HEK293T (cell line): ENCODE measurements at regions of chr17 and their contacts with region 1.

Region 1: DNA sequence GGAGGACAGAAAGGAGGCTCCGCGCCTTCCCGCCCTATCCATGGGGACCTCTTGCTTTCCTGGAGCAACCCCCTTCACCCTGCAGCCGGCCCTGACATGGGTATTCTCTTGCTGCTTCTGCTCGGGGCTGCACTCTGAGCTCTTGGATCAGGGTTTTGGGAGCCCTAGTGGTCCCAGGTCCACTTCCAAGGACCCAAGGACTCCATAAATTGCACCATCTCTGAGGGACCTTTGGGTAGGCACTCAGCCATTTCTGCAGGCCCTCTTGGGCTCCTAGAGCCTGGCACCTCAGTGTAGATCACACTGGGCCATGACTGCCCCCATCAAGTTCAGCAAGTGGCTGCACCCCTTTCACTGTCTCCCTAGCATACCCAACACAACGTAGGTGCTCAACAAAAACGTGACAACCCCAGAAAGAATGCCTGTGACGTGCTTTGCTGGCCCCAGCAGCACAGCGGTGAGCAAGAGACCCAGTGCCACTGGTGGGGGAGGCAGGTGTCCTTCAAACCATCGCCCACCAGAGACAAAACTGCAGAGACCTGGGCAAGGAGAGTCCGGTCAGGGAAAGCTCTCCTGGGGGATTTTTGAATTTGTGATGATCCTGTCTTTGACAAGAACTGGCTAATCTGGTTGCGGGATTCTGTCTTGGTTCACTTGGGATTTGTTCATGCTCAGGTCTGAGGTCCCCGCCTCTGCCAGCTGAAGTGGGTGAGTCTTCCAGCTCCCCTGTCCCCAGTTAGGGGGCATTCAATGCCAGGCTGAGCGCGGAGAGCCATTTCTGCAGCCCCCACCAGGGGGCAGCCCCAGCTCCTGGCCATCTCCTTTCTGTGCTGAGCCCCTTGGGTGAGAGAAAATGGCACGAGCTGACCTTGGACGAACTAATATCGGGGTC is 2.5 kb upstream of the RAB11FIP4 start:
- DNase-seq: peak; percentile 44

Region 2: DNA sequence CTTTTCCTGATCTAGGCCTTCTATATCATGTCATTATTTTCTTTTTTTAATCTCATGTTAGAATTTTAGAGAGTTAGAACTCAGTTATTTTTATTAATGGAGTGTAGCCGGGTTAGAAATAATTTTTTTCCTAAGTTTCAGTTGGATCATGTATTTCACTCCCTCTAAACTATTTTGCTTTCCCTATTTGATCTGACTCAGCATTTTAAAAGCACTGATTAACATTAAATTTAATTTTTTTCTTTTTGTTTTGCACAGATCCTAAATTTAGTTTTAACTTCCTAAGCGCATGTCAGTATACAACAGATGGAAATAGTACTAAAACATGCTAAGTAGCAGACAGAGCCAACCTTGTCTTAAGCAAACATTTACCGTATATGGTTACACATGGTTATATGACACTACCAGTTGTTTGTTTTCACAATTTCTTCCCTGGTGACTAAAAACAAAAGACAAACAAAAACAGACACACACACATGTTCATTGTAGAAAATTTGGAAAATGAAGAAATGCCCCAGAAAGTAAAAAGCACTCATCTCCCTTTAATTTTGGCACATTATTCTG is 31.1 kb before region 1 on chr17:
- CTCF ChIA-PET with region 1: no interaction called
- POLR2A ChIA-PET with region 1: no interaction called
- DNase-seq: no peak

Region 3: DNA sequence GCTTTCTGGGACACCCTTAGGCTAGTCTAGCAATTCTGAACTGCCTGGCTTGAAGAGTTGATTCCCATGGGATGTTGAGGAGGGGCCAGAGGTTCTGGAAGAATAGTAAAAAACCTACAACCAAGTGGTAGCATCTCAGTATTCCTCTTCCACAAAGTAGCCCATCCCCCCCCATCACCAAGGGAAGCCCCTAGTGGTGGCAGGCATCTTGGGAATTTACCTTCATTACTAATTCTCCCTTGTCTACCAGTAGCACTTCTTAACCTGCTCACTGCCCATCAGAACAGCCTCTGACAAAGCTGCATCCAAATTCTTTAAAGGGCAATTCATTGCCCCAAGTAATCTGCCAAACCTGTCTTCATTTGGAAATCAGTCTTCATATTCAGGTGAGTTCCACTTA is 10.4 kb before region 1 on chr17:
- CTCF ChIA-PET with region 1: interaction called, 20 read pairs
- POLR2A ChIA-PET with region 1: no interaction called
- DNase-seq: no peak